GM23248 (cell line): ENCODE measurements at regions of chr1 and their contacts with region 1.

Region 1: DNA sequence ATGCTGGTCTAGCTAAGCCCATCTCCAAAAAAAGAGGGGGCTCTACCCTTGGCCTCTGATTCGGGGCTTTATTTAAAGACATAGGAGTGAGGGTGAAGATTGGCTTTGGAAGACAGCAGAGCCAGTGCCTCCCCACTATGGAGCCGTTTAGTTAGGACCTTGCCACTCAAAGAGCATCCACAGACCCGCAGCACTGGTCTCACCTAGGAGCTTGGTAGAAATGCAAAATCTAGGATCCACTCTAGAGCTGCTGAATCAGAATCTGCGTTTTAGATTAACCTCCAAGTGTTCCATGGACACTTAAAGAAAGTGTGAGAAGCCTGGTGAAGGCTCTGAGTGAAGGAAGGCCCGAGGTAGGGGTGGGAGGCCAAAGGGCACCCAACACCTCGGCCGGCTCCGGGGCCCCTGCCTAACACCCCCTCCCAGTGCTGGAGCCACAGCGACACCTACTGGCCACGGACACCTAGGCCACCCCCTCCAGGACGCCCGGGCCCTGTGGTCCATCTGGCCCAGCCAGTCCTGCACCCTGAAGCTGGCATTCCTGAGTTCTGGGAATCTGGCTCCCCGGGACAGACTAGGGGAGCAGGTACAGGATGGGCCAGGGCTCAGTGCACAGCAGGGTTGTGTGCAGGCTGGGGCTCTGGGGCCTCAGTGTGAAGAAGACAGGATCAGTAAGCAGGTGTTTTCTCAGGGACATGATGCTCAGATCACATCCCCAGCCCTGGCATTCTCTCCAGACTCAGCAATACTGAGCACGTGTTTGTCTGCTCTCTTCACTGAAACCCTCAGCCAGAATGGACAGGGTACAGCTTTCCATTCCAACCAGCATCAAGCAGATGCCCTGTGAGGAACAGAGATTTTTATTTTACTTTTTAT is 79.2 kb downstream of the TMEM53 start:
- DNase-seq: peak; percentile 75
- H3K4me3 ChIP-seq: no peak overlapping the region
- H3K27ac ChIP-seq: no peak overlapping the region
- H3K4me1 ChIP-seq: no peaks in the 10 kb centered on the region
- H3K27me3 ChIP-seq: peaks cover 17% of the 10 kb centered on the region

Region 2: GRCh38 chr1:44036409-44037139 is 558.5 kb before region 1 on chr1:
- in situ Hi-C with region 1: no loop called
- DNase-seq: peak; percentile 83
- H3K4me3 ChIP-seq: no peak overlapping the region
- H3K27ac ChIP-seq: no peak overlapping the region
- H3K4me1 ChIP-seq: peaks cover 34% of the 10 kb centered on the region
- H3K27me3 ChIP-seq: no peaks in the 10 kb centered on the region

Region 3: GRCh38 chr1:44220001-44220733 is 374.9 kb before region 1 on chr1:
- in situ Hi-C with region 1: loop called (anchors 10 kb)
- DNase-seq: peak; percentile 85
- H3K4me3 ChIP-seq: no peak overlapping the region
- H3K27ac ChIP-seq: peak overlapping the region; percentile 49
- H3K4me1 ChIP-seq: 0 out of 2 replicates have a peak, but pooled peaks cover 8% of the 10 kb centered on the region
- H3K27me3 ChIP-seq: no peaks in the 10 kb centered on the region

Region 4: DNA sequence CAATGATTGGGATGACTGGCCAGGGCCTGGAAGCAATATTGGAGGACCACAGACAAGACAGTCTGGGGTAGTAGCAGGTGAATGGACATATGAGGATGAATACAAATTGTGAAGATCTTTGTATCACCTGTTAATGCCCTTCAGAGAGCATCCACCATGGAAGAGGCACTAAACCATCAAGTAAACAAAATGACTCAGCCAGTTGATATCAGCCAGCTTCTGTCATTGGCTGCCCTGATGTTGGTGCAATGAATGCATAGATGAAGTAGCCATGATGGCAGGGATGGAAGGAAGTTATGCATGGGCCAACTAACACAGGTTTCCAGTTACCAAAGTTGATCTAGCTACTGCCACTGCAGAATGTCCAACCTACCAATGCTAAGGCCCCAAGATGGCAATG is 223.9 kb before region 1 on chr1:
- in situ Hi-C with region 1: loop called (anchors 5 kb)
- DNase-seq: no peak
- H3K4me3 ChIP-seq: no peak overlapping the region
- H3K27ac ChIP-seq: no peak overlapping the region
- H3K4me1 ChIP-seq: no peaks in the 10 kb centered on the region
- H3K27me3 ChIP-seq: peaks cover 10% of the 10 kb centered on the region